Left cardiac atrium (tissue), 4 donors: ENCODE measurements at regions of chr11 and their contacts with region 1.

Region 1: GRCh38 chr11:11777897-11778296 is 63.9 kb upstream of the USP47 start:
- DNase-seq: no peak
- ATAC-seq: no peak

Region 2: DNA sequence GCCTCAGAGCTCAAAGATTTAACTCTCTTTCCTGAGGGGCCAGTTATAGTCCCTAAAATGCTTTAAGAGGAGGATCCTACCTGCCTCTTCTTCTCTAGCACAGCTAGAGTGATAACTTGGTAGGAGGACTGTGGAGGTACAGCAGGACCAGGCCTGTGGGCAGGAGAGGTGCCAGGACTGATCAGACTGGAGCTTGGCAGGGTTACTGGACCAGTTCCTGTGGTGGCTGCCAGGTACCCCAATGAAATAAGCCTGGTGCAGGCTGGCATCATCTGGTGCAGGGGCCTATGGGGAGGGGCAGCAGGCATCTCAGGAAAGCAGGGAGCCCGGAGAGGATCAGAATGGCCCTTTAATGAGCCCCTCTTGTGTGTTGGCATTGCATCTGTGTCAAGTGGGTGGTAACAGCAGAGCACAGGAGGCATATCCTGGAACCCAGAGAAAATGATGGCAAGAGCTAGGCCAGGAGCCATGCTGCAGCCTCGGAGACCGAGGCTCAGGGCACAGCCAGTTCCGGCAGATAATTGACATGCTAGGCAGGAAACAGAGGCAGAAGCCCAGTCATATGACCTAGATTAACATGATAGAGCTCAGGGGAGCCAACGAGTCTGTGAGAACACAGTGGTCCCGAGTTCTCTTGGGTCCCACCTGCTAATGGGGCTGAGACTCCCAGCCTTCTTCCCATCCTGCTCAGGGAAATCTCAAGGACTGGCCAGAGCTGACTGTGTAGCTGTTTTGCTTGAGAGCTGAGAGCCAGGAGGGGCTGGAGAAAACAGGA is 732.6 kb before region 1 on chr11:
- intact Hi-C with region 1: loop called in 1 of 2 experiments (anchors 5 kb)
- DNase-seq: no peak
- ATAC-seq: no peak

Region 3: GRCh38 chr11:11157185-11157584 is 620.7 kb before region 1 on chr11:
- intact Hi-C with region 1: loop called in 1 of 2 experiments (anchors 5 kb)
- DNase-seq: peak; percentile 41
- ATAC-seq: peak in 1 of 2 donors; percentile 70

Region 4: GRCh38 chr11:12159351-12160099 is 381.6 kb after region 1 on chr11:
- intact Hi-C with region 1: no loop called
- DNase-seq: no peak
- ATAC-seq: peak; percentile 39 to 74